B cell (primary cell): ENCODE measurements at regions of chr2 and their contacts with region 1.

Region 1: GRCh38 chr2:144240587-144241339 is 279.2 kb downstream of the ZEB2 start:
- DNase-seq: peak; percentile 61
- ATAC-seq: peak; percentile 82
- H3K4me3 ChIP-seq: peak overlapping the region in 3 of 5 experiments; percentile 18 to 28 (median 25)
- H3K4me3 Mint-ChIP-seq: peak overlapping the region; percentile 77
- H3K27ac ChIP-seq: peak overlapping the region; percentile 67 to 83
- H3K27ac Mint-ChIP-seq: peak overlapping the region; percentile 91
- H3K4me1 ChIP-seq: peaks cover 59 to 62% of the 10 kb centered on the region in 2 donors
- H3K4me1 Mint-ChIP-seq: peaks cover 77% of the 10 kb centered on the region
- H3K27me3 ChIP-seq: no peaks in the 10 kb centered on the region
- H3K27me3 Mint-ChIP-seq: no peaks in the 10 kb centered on the region
- CTCF ChIP-seq: no peak

Region 2: GRCh38 chr2:144048631-144049060 is 192.1 kb before region 1 on chr2:
- CTCF ChIA-PET with region 1: no interaction called
- POLR2A ChIA-PET with region 1: no interaction called
- intact Hi-C with region 1: no loop called
- DNase-seq: no peak
- ATAC-seq: no peak
- H3K4me3 ChIP-seq: no peak overlapping the region
- H3K4me3 Mint-ChIP-seq: no peak overlapping the region
- H3K27ac ChIP-seq: no peak overlapping the region
- H3K27ac Mint-ChIP-seq: no peak overlapping the region
- H3K4me1 ChIP-seq: no peaks in the 10 kb centered on the region
- H3K4me1 Mint-ChIP-seq: no peaks in the 10 kb centered on the region
- H3K27me3 ChIP-seq: no peaks in the 10 kb centered on the region
- H3K27me3 Mint-ChIP-seq: no peaks in the 10 kb centered on the region
- CTCF ChIP-seq: no peak

Region 3: GRCh38 chr2:144183727-144184126 is 57.0 kb before region 1 on chr2:
- CTCF ChIA-PET with region 1: interaction called, 3 read pairs
- POLR2A ChIA-PET with region 1: no interaction called
- intact Hi-C with region 1: loop called (anchors 5 kb)
- DNase-seq: peak; percentile 84
- ATAC-seq: peak; percentile 98
- H3K4me3 ChIP-seq: peak overlapping the region in 4 of 5 experiments; percentile 6 to 32 (median 22)
- H3K4me3 Mint-ChIP-seq: peak overlapping the region; percentile 86
- H3K27ac ChIP-seq: no peak overlapping the region
- H3K27ac Mint-ChIP-seq: no peak overlapping the region
- H3K4me1 ChIP-seq: peaks cover 8 to 22% of the 10 kb centered on the region in 2 donors
- H3K4me1 Mint-ChIP-seq: peaks cover 27% of the 10 kb centered on the region
- H3K27me3 ChIP-seq: no peaks in the 10 kb centered on the region
- H3K27me3 Mint-ChIP-seq: no peaks in the 10 kb centered on the region
- CTCF ChIP-seq: no peak

Region 4: GRCh38 chr2:144201868-144202468 is 38.8 kb before region 1 on chr2:
- CTCF ChIA-PET with region 1: interaction called, 3 read pairs
- POLR2A ChIA-PET with region 1: no interaction called
- intact Hi-C with region 1: loop called (anchors 5 kb)
- DNase-seq: no peak
- ATAC-seq: no peak
- H3K4me3 ChIP-seq: no peak overlapping the region
- H3K4me3 Mint-ChIP-seq: no peak overlapping the region
- H3K27ac ChIP-seq: no peak overlapping the region
- H3K27ac Mint-ChIP-seq: no peak overlapping the region
- H3K4me1 ChIP-seq: no peaks in the 10 kb centered on the region
- H3K4me1 Mint-ChIP-seq: peaks cover 6% of the 10 kb centered on the region
- H3K27me3 ChIP-seq: no peaks in the 10 kb centered on the region
- H3K27me3 Mint-ChIP-seq: no peaks in the 10 kb centered on the region
- CTCF ChIP-seq: no peak

Region 5: GRCh38 chr2:144230448-144231085 is 10.2 kb before region 1 on chr2:
- CTCF ChIA-PET with region 1: no interaction called
- POLR2A ChIA-PET with region 1: no interaction called
- intact Hi-C with region 1: loop called (anchors 1 kb)
- DNase-seq: no peak
- ATAC-seq: no peak
- H3K4me3 ChIP-seq: no peak overlapping the region
- H3K4me3 Mint-ChIP-seq: no peak overlapping the region
- H3K27ac ChIP-seq: no peak overlapping the region
- H3K27ac Mint-ChIP-seq: no peak overlapping the region
- H3K4me1 ChIP-seq: peaks cover 5 to 14% of the 10 kb centered on the region in 2 donors
- H3K4me1 Mint-ChIP-seq: peaks cover 44% of the 10 kb centered on the region
- H3K27me3 ChIP-seq: no peaks in the 10 kb centered on the region
- H3K27me3 Mint-ChIP-seq: no peaks in the 10 kb centered on the region
- CTCF ChIP-seq: no peak

Region 6: DNA sequence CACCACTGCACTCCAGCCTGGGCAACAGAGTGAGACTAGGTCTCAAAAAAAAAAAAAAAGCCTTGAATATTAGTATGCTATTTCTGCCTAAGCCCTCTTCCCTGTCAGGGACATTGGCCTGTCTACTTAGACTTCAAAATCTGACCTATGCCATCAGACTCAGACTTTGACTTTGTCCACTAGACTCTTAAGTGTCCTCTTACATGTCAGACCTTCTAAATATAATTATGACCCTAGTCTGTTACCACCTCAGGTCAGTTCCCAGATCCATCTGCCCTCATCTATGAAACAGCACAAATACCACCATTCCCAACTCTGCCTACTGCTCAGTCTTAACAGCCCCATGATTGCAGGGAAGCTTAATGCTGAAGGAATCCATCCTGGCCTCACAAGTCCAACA is 34.6 kb after region 1 on chr2:
- CTCF ChIA-PET with region 1: no interaction called
- POLR2A ChIA-PET with region 1: no interaction called
- intact Hi-C with region 1: loop called (anchors 5 kb)
- DNase-seq: no peak
- ATAC-seq: no peak
- H3K4me3 ChIP-seq: no peak overlapping the region
- H3K4me3 Mint-ChIP-seq: no peak overlapping the region
- H3K27ac ChIP-seq: no peak overlapping the region
- H3K27ac Mint-ChIP-seq: no peak overlapping the region
- H3K4me1 ChIP-seq: no peaks in the 10 kb centered on the region
- H3K4me1 Mint-ChIP-seq: peaks cover 16% of the 10 kb centered on the region
- H3K27me3 ChIP-seq: no peaks in the 10 kb centered on the region
- H3K27me3 Mint-ChIP-seq: no peaks in the 10 kb centered on the region
- CTCF ChIP-seq: no peak